ENCODE measurements at regions of chr5 and their contacts with region 1.

Region 1: DNA sequence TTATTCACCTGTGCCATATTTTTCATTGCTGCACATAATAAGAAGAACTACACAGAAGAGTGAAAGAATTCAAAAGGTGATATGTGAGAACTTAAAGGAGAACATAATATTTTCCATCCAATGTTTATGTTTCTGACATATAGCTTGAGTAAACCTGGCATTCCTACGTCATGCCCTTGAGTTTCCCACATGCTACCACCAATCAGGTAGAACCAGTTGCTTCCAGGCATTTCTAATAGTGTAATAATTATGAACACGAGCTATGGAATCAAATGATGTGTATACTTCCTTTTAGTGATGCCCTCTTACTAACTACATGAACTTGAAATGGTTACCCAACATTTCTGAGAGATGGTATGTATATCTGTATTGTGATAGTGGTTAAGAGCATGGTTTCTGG is 550.3 kb downstream of the HTR1A start:
- DNase-seq: no peak
- ATAC-seq: no peak

Region 2: DNA sequence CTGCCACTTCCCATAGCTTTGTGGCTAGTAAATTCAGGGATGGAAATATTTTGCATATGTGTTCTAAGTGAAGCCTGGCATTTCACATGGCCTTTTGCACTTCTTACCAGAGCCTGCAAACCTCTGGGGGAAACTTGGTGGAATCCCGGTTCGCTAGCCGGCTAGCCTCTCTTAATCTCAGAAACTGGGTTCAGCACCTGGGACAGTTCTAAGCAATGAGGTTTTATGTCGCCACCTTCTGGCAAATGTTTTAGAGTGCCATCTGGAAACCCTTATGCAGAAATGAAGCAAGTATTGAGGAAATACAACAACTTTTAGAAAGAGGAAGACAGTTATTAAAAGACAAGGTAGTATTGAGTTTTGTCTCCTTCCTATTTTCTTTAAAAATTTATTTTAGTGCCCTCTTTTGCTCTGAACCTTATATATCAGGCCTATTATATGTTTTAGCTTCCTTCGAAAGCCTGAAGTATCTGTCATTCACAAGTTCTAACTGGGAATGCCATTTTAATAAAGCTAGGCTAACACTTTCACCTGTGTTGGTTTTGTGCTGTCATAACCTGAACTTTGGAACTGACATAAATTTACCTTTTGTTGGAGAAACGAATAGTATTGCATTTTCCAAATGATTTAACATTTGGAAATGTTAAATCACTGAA is 551.3 kb after region 1 on chr5:
- intact Hi-C with region 1: loop called (anchors 10 kb)
- DNase-seq: no peak
- ATAC-seq: no peak

Measured in Right ventricle myocardium superior (tissue), 1 donor.